ENCODE measurements at regions of chr1 and their contacts with region 1.

Region 1: DNA sequence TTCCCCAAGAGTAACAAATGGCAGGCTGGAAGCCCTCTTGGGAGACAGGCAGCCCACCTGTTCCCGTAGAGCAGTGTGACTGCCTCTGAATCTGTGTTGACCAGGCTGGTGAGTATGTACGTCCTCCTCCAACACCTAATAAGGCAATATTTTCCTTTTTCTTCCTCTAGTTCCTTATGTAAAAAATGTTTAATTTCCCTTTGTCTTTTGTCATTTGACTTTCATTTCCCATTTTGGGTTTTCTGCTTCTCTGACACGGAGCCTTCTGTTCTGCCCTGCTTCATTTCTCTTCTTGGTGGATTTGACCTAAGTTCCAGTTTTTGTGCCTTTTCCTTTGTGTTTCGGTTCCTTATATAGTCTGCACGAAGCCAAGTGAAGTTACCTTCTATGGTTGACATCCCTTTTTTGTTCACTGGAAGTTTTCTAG is 65.8 kb upstream of the ATF3 start:
- DNase-seq: no peak
- H3K4me3 ChIP-seq: no peak overlapping the region
- H3K27ac ChIP-seq: no peak overlapping the region
- H3K4me1 ChIP-seq: no peaks in the 10 kb centered on the region
- H3K27me3 ChIP-seq: no peaks in the 10 kb centered on the region
- CTCF ChIP-seq: no peak

Region 2: DNA sequence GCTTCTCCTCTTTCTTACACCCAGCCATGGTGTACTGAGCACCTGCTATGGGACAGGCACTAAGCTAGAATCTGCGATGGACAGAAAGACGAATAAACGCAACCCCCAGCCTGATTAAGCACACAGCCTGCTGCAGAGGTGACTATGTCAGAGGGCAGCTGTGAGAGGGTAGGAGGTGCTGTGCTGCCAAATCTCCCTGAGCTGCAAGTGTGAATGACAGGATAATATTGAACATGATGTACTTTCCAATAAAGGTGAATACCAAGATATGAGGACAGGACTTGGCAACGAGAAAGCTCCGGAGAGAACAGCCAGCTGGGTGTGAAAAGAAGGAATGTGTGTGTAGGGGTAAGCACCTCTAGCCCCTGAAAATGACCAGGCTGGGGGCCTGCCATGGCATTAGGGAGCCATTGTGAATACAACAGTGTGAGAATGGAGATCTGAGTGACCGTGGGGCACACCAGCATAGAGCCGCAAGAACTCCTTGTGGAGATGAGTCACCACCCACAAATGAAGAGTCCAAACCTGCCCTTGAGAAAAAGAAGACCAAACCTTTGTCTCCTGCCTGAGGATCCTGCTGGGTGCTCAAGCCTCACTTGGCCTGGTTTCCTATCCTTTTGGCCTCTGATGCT is 17.2 kb before region 1 on chr1:
- CTCF ChIA-PET with region 1: interaction called, 13 read pairs
- POLR2A ChIA-PET with region 1: interaction called, 9 read pairs
- intact Hi-C with region 1: no loop called
- DNase-seq: no peak
- H3K4me3 ChIP-seq: no peak overlapping the region
- H3K27ac ChIP-seq: no peak overlapping the region
- H3K4me1 ChIP-seq: 0 out of 2 replicates have a peak, but pooled peaks cover 5% of the 10 kb centered on the region
- H3K27me3 ChIP-seq: no peaks in the 10 kb centered on the region
- CTCF ChIP-seq: no peak

Measured in PC-9 (cell line).